ENCODE measurements at regions of chr9 and their contacts with region 1.

Region 1: DNA sequence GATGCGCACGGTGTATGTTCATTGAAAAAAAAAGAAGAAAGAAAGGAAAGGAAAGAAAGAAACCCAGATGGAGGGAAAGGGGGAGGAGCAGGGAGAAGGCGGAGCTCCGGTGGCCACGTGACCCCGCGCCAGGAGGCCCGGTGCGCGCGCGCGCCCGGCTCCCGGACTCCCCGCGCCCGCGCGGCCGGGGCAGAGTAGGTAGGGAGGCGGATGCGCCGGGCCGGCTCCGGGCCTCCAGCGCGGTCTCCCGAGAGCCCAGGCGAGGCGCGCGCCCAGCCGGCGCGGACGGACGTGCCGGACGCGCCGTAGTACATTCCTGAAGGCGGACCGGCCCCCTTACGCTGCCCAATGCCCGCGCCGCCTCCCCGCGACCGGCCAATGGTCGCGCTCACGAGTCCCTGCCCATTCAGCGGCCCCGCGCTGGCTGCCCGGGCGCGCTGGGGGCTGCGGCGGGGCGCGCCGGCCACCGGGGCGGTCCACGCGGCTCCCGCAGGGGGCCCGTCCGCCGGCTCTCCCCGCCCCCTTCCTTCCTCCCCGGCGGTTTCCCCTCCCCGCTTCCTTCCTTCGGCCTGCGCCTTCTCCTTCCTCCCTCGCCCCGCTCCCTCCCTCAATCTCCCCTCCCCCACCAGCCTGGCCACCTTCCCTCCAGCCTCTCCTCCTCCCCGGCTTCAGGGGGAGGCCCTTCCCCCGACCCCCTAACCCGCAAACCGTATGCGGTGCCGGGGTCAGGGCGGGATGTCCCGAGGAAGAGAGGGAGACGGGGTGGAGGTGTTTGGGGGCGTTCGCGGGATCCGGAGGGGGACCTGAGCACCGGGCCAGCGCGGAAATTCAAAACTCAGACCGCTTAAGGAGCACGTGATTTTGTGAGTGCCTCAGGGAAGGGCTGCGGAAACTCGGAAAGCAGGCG is 5.8 kb downstream of the PTCH1 start:
- DNase-seq: peak; percentile 95
- ATAC-seq: peak; percentile 89
- H3K4me3 ChIP-seq: peak overlapping the region; percentile 89
- H3K27ac ChIP-seq: peak overlapping the region; percentile 85
- H3K4me1 ChIP-seq: peaks cover 21% of the 10 kb centered on the region
- H3K27me3 ChIP-seq: no peaks in the 10 kb centered on the region
- CTCF ChIP-seq: no peak

Region 2: GRCh38 chr9:95341293-95341962 is 169.5 kb before region 1 on chr9:
- intact Hi-C with region 1: loop called (anchors 10 kb)
- DNase-seq: no peak
- ATAC-seq: no peak
- H3K4me3 ChIP-seq: no peak overlapping the region
- H3K27ac ChIP-seq: no peak overlapping the region
- H3K4me1 ChIP-seq: no peaks in the 10 kb centered on the region
- H3K27me3 ChIP-seq: no peaks in the 10 kb centered on the region
- CTCF ChIP-seq: no peak

Region 3: DNA sequence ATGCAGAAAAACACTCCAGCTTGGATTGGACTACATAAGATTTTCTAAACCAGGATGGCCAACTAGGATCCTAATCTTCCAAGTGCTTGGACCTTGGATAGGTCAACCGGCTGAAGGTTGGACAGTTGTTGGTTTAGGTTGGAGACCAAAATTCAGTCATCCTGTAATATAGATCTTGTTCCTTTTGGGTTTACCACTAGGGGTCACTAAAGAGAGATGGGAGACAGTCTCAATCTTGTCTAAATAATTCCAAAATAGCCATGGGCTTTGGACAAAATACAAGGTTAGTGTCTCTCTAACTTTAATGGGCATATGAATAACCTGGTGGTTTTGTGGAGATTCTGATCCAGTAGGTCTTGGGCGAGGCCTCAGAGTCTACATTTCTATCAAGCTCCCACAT is 215.8 kb after region 1 on chr9:
- intact Hi-C with region 1: loop called (anchors 10 kb)
- DNase-seq: no peak
- ATAC-seq: peak; percentile 70
- H3K4me3 ChIP-seq: no peak overlapping the region
- H3K27ac ChIP-seq: no peak overlapping the region
- H3K4me1 ChIP-seq: no peaks in the 10 kb centered on the region
- H3K27me3 ChIP-seq: no peaks in the 10 kb centered on the region
- CTCF ChIP-seq: peak; percentile 72